Activated CD4-positive, alpha-beta T cell treated with anti-CD3 and anti-CD28 coated beads for 36 hours (primary cell): ENCODE measurements at regions of chr10 and their contacts with region 1.

Region 1: GRCh38 chr10:69318106-69318866 is 40.0 kb downstream of the HK1 start:
- DNase-seq: peak; percentile 96
- ATAC-seq: peak; percentile 88
- H3K4me3 Mint-ChIP-seq: peak overlapping the region; percentile 86
- H3K27ac Mint-ChIP-seq: peak overlapping the region; percentile 92
- H3K4me1 Mint-ChIP-seq: peaks cover 53% of the 10 kb centered on the region
- H3K27me3 Mint-ChIP-seq: no peaks in the 10 kb centered on the region

Region 2: GRCh38 chr10:68955832-68956532 is 362.3 kb before region 1 on chr10 and contains the start of gene DDX21:
- CTCF ChIA-PET with region 1: no interaction called
- POLR2A ChIA-PET with region 1: interaction called, 4 read pairs
- intact Hi-C with region 1: loop called in 1 of 2 experiments (anchors 2 kb)
- DNase-seq: peak; percentile 94
- ATAC-seq: peak; percentile 85
- H3K4me3 Mint-ChIP-seq: peak within 1 kb of the TSS; percentile 98
- H3K27ac Mint-ChIP-seq: peak within 1 kb of the TSS; percentile 100
- H3K4me1 Mint-ChIP-seq: peaks cover 35% of the 10 kb centered on the region
- H3K27me3 Mint-ChIP-seq: no peaks in the 10 kb centered on the region
- total RNA-seq, gene DDX21: 187 to 192 TPM

Region 3: GRCh38 chr10:69123747-69124562 is 194.3 kb before region 1 on chr10 and contains the start of gene VPS26A:
- CTCF ChIA-PET with region 1: no interaction called
- POLR2A ChIA-PET with region 1: no interaction called
- intact Hi-C with region 1: loop called in 1 of 2 experiments (anchors 1 kb)
- DNase-seq: peak; percentile 100
- ATAC-seq: peak; percentile 95
- H3K4me3 Mint-ChIP-seq: peak within 1 kb of the TSS; percentile 90
- H3K27ac Mint-ChIP-seq: peak within 1 kb of the TSS; percentile 91
- H3K4me1 Mint-ChIP-seq: peaks cover 31% of the 10 kb centered on the region
- H3K27me3 Mint-ChIP-seq: no peaks in the 10 kb centered on the region
- total RNA-seq, gene VPS26A: 27.1 to 32.2 TPM

Region 4: GRCh38 chr10:69237528-69238159 is 80.6 kb before region 1 on chr10:
- CTCF ChIA-PET with region 1: interaction called, 9 read pairs
- POLR2A ChIA-PET with region 1: no interaction called
- intact Hi-C with region 1: loop called in 1 of 2 experiments (anchors 2 kb)
- DNase-seq: peak; percentile 94
- ATAC-seq: peak; percentile 99
- H3K4me3 Mint-ChIP-seq: no peak overlapping the region
- H3K27ac Mint-ChIP-seq: no peak overlapping the region
- H3K4me1 Mint-ChIP-seq: peaks cover 22% of the 10 kb centered on the region
- H3K27me3 Mint-ChIP-seq: no peaks in the 10 kb centered on the region

Region 5: GRCh38 chr10:69408318-69409175 is 90.3 kb after region 1 on chr10:
- CTCF ChIA-PET with region 1: interaction called, 4 read pairs
- POLR2A ChIA-PET with region 1: interaction called, 3 read pairs
- intact Hi-C with region 1: loop called in 1 of 2 experiments (anchors 1 kb)
- DNase-seq: peak; percentile 95
- ATAC-seq: peak; percentile 93
- H3K4me3 Mint-ChIP-seq: no peak overlapping the region
- H3K27ac Mint-ChIP-seq: peak overlapping the region; percentile 67
- H3K4me1 Mint-ChIP-seq: peaks cover 11% of the 10 kb centered on the region
- H3K27me3 Mint-ChIP-seq: no peaks in the 10 kb centered on the region

Region 6: GRCh38 chr10:70832852-70833528 is 1514.7 kb after region 1 on chr10:
- CTCF ChIA-PET with region 1: no interaction called
- POLR2A ChIA-PET with region 1: no interaction called
- intact Hi-C with region 1: loop called in 1 of 2 experiments (anchors 10 kb)
- DNase-seq: no peak
- ATAC-seq: peak; percentile 74
- H3K4me3 Mint-ChIP-seq: peak overlapping the region; percentile 20
- H3K27ac Mint-ChIP-seq: peak overlapping the region; percentile 88
- H3K4me1 Mint-ChIP-seq: peaks cover 89% of the 10 kb centered on the region
- H3K27me3 Mint-ChIP-seq: no peaks in the 10 kb centered on the region